ENCODE measurements at regions of chr10 and their contacts with region 1.

Region 1: DNA sequence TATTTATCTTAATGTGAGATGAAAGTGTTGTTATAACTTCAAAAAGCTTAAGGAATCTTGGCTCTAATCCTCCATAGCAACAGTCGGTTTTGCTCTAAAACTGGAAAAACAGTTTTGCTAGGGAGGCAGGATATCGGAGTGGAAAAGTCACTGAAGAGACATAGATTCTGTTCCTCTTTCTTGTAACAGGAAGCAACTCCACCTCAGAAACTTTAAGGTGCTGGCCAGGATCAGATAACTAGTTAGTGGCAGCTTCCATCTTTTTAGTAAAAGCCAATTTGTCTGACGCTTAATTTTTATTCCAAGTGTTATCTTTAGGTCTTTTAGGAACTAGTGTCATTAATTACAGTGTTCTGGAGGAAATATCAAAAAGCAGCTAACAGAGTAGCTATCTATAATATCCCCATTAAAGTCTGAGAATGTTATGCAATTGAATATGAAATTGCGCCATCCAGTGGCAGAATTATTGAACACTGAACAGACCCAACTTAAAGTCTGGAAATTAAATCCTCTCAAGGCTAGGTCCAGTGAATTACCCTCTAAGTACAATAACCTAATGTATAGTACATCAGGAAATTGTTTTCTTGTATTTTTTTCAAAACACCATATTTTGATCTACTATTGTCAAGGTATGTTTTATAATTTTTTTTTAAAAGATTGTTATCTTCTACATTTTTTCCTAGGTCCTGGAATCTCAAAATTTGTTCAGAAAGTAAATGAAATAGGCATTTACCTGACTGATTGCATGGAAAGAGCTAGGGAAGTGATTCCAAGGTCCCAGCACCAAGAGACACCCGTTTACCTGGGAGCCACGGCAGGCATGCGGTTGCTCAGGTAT is 65.9 kb upstream of the CC2D2B start:
- DNase-seq: peak; percentile 40
- H3K4me3 ChIP-seq: no peak overlapping the region
- H3K27ac ChIP-seq: no peak overlapping the region
- H3K4me1 ChIP-seq: no peaks in the 10 kb centered on the region
- H3K27me3 ChIP-seq: peaks cover 3% of the 10 kb centered on the region
- CTCF ChIP-seq: peak; percentile 52 to 72

Region 2: GRCh38 chr10:95374597-95375209 is 467.2 kb before region 1 on chr10:
- CTCF ChIA-PET with region 1: interaction called, 3 read pairs
- dilution Hi-C with region 1: no loop called
- in situ Hi-C with region 1: no loop called
- intact Hi-C with region 1: loop called (anchors 2 kb)
- DNase-seq: peak; percentile 68
- H3K4me3 ChIP-seq: no peak overlapping the region
- H3K27ac ChIP-seq: no peak overlapping the region
- H3K4me1 ChIP-seq: no peaks in the 10 kb centered on the region
- H3K27me3 ChIP-seq: no peaks in the 10 kb centered on the region
- CTCF ChIP-seq: peak; percentile 95 to 99

Region 3: GRCh38 chr10:95821720-95822119 is 20.2 kb before region 1 on chr10:
- CTCF ChIA-PET with region 1: interaction called, 16 read pairs
- dilution Hi-C with region 1: no loop called
- in situ Hi-C with region 1: no loop called
- intact Hi-C with region 1: no loop called
- DNase-seq: no peak
- H3K4me3 ChIP-seq: no peak overlapping the region
- H3K27ac ChIP-seq: no peak overlapping the region
- H3K4me1 ChIP-seq: peaks cover 10% of the 10 kb centered on the region
- H3K27me3 ChIP-seq: no peaks in the 10 kb centered on the region
- CTCF ChIP-seq: no peak

Measured in mammary epithelial cell (primary cell).